Posterior cingulate gyrus (tissue), 11 donors: ENCODE measurements at regions of chr12 and their contacts with region 1.

Region 1: GRCh38 chr12:40342010-40342409 is 117.2 kb downstream of the LRRK2 start:
- DNase-seq: no peak

Region 2: GRCh38 chr12:40086471-40086870 is 255.5 kb before region 1 on chr12:
- intact Hi-C with region 1: no loop called
- DNase-seq: no peak

Region 3: GRCh38 chr12:40286583-40286982 is 55.4 kb before region 1 on chr12:
- intact Hi-C with region 1: no loop called
- DNase-seq: no peak

Region 4: DNA sequence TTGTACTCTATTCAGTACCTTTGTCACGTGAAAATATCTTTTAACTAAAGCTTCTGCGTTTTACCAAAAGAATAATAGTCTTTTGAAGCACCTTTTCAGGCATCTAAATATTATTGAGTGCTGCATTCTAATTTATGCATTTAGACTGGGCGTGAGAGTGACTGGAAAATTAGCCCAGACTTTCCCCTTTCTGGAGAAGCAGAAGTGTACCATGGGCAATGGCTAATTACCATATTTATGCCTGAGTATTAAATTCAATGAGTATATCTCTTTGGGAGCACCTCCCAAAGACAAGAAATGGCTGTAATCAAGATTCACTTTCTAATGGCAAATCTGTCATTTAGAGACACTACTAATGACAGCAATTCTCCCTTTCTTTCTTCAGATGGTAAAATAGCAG is 57.6 kb after region 1 on chr12:
- intact Hi-C with region 1: loop called (anchors 2 kb)
- DNase-seq: no peak

Region 5: GRCh38 chr12:40436564-40436963 is 94.6 kb after region 1 on chr12:
- intact Hi-C with region 1: no loop called
- DNase-seq: no peak